PC-9 (cell line): ENCODE measurements at regions of chr15 and their contacts with region 1.

Region 1: DNA sequence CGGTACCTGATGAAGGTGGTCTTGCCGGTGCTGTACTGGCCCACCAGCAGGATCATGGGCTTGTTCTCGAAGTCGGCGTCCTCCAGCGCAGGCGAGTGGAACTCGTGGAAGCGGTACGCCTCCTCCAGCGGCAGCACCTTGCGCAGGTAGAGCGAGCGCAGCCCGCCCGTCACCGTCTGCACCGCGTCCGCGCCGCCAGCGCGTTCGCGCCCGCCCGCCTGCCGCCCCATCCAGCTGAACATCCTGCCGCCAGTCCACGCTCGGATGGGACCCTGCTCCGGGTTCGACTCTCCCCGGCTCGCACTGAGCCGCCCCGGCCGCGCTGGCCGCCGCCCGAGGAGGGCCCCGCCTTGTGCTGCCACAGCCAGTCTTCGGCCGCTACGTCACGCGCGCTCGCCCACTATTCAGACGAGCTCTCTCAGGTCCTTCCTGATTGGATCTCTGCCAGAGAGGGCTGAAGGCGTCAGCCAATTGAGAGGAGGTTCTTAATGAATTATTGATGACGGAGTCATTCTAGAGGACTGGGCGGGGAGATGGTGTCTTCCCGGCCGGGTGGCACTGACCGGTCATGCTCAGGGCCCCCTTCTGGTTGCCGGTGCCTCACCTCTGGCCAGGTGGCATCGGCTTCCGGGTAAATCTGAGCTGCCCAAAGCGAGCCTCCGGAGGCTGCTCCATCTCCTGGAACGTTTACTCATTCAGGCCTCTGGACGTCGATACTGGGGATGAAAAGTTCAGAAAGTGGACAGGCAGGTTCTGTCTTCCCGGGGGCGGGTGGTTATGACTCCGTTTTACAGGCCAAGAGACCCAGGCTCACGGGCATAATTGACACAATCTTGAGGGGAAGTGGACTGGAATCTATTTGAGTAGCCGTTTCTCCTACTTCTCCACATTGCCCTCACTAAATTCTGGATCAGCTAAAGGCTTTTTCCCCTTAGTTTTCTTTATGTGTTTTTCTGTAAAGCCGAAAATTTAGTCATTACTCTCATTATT is at the start of gene EHD4:
- DNase-seq: peak; percentile 96
- H3K4me3 ChIP-seq: peak within 1 kb of the TSS; percentile 77
- H3K27ac ChIP-seq: peak within 1 kb of the TSS; percentile 92
- H3K4me1 ChIP-seq: peaks cover 28% of the 10 kb centered on the region
- H3K27me3 ChIP-seq: no peaks in the 10 kb centered on the region
- CTCF ChIP-seq: no peak; the same call in 1 of the 2 replicates
- total RNA-seq, gene EHD4: 15.4 and 18.1 TPM in 2 replicates

Region 2: DNA sequence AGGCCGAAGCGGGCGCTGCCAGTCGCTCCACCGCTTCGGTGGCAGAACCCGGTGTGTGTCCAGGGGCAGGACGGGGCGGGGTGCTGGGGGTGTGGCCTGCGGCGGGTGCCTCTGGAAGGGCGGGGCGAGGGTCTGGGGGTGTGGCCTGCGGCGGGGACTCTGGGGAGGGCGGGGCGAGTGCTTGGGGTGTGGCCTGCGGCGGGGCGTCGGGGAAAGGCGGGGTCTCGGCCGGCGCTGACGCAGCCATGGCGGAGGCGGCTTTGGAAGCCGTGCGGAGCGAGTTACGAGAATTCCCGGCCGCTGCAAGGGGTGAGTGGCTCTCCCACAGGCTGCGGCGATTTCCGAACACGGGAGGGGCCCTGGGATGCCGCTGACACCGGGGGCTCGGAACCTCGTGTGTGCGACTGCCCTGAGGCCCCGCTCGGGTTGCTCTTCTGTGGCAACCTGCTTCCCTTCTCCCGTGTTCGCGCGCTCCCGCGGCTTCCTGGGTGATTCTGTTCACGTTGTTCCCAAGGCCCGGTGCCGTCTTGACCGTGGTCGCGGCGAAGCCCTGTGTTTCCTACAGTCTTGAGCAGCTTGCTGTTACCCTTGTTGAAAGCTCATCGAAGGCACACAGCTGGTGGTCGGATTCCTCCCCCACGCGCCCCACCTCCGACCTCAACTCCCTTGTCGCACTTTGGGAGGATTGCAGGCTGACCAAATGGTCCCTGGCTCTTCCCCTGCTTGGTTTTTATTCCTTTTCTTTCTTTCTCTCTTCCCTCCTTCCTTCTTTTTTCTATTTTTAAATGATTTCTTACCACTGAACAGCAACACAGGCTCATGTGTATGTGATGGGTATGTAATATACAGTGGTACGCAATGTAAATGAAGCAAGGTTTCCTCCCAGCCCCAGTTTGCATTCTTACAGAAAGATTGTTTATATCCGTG is 144.4 kb before region 1 on chr15 and contains the start of gene JMJD7:
- CTCF ChIA-PET with region 1: no interaction called
- POLR2A ChIA-PET with region 1: no interaction called
- intact Hi-C with region 1: loop called (anchors 2 kb)
- DNase-seq: peak; percentile 51 to 93
- H3K4me3 ChIP-seq: peak within 1 kb of the TSS; percentile 81
- H3K27ac ChIP-seq: no peak within 1 kb of the TSS
- H3K4me1 ChIP-seq: peaks cover 16% of the 10 kb centered on the region
- H3K27me3 ChIP-seq: no peaks in the 10 kb centered on the region
- CTCF ChIP-seq: no peak
- total RNA-seq, gene JMJD7: 6.5 and 11.7 TPM in 2 replicates

Region 3: DNA sequence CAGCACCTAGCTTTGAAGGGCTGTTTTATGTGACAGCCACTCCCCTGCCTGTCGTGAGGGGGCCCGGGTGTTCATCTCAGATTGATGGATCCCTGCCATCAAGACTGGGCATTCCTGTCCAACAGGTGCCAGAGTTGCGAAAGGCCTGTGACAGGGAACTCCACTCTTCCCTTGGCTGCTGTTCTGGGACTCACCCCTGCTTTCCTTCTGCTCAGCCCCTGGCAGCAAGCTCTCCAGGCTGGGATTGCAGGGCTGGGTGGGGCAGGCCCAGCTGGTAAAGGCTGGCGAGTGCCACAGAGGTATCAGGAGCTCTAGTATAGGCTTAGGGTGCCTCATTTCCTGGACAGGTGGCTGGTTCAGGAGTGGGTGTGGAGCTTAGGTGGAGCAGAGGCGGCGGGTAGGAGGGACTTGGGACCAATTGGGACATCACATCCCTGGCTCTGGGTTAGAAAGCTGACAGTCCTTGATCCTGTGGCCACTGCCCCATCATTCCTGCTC is 134.1 kb before region 1 on chr15 and contains the start of gene PLA2G4B:
- CTCF ChIA-PET with region 1: no interaction called
- POLR2A ChIA-PET with region 1: no interaction called
- intact Hi-C with region 1: loop called (anchors 2 kb)
- DNase-seq: peak; percentile 92 to 96
- H3K4me3 ChIP-seq: no peak within 1 kb of the TSS
- H3K27ac ChIP-seq: peak within 1 kb of the TSS; percentile 29; the same call in 1 of the 2 replicates
- H3K4me1 ChIP-seq: peaks cover 24% of the 10 kb centered on the region
- H3K27me3 ChIP-seq: no peaks in the 10 kb centered on the region
- CTCF ChIP-seq: no peak
- total RNA-seq, gene PLA2G4B: 3.6 and 7.8 TPM in 2 replicates

Region 4: DNA sequence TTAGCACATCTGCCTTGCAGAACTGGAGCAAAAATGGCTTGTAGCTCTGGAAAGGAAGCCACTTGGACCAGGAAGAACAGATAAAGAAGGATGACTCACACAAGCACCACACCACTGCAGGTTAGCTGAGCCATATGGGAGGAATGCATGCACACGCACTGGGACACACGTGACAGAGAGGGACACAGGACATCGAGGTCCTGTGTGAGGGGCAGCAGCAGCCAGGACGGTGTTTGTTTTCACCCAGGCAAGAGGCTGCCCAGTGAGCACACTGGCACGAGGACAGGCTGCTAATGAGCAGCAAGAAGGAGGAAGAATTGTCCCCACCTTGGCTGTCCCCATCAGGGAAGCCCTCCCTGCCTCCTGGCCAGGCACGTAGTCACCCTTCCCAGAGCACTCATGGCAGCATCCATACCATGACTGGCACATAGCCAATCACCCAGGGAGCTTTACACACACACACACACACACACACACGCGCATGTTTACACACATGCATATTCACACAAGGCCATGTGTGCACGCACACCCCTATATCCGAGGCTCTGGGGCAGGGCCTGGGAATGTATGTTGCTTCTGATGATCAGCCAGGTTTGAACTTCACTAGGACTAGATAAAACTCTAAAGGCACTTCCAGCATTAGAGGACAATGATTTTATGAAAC is 54.6 kb before region 1 on chr15:
- CTCF ChIA-PET with region 1: no interaction called
- POLR2A ChIA-PET with region 1: no interaction called
- intact Hi-C with region 1: loop called (anchors 1 kb)
- DNase-seq: peak; percentile 70 to 81
- H3K4me3 ChIP-seq: no peak overlapping the region
- H3K27ac ChIP-seq: no peak overlapping the region
- H3K4me1 ChIP-seq: peaks cover 10% of the 10 kb centered on the region; the same call in 1 of the 2 replicates
- H3K27me3 ChIP-seq: no peaks in the 10 kb centered on the region
- CTCF ChIP-seq: no peak

Region 5: DNA sequence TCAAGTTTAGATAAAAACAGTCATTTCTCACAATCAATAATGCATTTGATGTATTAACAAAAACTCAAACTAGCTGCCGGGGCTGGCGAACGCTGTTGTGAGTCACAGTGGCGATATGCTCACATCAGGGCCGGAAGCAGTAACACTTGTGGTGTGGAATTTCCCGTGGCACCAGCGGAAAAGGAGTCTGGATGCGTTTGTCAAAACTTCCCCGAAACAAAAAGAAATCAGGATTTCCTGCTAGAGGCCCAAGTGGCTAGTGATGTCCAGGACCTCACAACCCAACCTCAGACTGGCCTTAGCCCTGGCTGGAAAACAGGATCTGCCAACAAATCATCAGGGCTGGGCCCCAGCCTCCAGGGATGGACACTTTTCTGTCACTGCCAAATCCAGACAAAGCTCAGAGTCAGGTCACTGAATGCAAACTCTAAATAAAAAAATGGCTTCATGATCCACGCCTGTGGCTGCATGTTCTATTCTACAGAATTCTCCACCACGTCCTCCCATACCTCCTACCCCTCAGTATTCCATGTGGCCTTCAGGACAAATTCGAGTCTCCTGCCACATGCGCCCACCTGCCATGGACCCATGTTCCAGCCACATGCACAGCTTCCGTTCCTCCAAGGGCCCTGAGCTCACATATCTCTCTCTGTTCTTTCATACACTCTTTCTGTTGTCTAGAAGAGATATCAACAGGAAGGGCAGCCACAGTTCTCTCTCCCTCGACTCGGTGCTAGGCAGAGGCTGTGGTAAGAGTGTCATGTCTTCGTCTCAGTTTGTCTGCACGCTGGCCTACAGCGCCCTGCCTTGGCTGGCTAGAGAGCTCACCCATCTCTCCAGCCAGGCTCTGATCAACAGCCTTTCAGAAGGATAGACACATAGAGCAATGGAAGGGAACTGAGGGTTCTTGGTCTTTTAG is 35.6 kb before region 1 on chr15:
- CTCF ChIA-PET with region 1: no interaction called
- POLR2A ChIA-PET with region 1: interaction called, 4 read pairs
- intact Hi-C with region 1: loop called (anchors 2 kb)
- DNase-seq: no peak
- H3K4me3 ChIP-seq: no peak overlapping the region
- H3K27ac ChIP-seq: no peak overlapping the region
- H3K4me1 ChIP-seq: peaks cover 30% of the 10 kb centered on the region
- H3K27me3 ChIP-seq: no peaks in the 10 kb centered on the region
- CTCF ChIP-seq: no peak